ENCODE measurements at regions of chr15 and their contacts with region 1.

Region 1: GRCh38 chr15:50438251-50438650 is 14.0 kb downstream of the USP8 start:
- DNase-seq: no peak
- ATAC-seq: no peak
- H3K4me3 ChIP-seq: no peak overlapping the region
- H3K27ac ChIP-seq: no peak overlapping the region
- H3K4me1 ChIP-seq: no peaks in the 10 kb centered on the region
- H3K27me3 ChIP-seq: no peaks in the 10 kb centered on the region
- CTCF ChIP-seq: no peak

Region 2: DNA sequence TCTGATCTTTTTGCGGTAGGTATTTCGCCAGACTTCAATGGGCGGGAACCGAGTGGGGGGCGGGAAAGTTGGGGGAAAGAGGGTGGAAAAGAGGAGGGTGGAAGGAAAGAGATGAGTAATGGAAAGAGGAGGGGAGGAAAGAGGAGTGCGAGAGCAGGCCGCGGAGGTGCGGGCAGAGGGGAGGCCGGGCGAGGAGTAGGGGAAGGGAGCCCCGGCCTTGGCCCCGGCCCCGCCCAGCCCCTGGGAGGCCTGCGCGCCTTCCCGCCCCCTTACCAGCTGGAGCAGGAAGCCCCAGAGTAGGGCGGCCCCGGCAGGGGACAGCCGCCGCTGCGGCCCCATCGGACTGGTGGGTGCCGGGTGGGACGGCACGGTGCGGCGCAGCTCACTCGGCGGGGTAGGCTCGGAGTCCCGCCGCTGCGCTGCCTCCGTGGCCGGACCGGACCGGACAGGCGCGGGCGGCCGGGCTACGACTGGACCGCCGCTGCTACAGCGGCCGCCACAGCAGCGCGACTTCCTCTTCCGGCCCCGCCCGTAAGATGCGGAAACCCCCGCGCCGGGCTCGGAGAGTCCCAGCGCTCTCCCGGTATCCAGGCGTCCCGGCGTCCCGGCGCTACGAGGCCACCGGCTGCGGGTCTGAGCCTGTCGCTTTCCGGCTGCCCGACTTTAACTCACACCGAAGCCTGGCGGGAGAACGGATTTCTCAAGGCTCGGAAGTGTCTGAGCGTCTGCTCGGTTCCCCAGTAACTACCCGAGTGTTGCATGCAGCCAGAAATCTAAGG is 327.1 kb after region 1 on chr15 and contains the start of gene SPPL2A:
- CTCF ChIA-PET with region 1: no interaction called
- POLR2A ChIA-PET with region 1: interaction called, 20 read pairs
- in situ Hi-C with region 1: no loop called
- intact Hi-C with region 1: no loop called
- DNase-seq: no peak
- ATAC-seq: peak; percentile 99
- H3K4me3 ChIP-seq: peak within 1 kb of the TSS; percentile 77 to 91
- H3K27ac ChIP-seq: peak within 1 kb of the TSS; percentile 98
- H3K4me1 ChIP-seq: peaks cover 14% of the 10 kb centered on the region; the same call in 1 of the 2 replicates
- H3K27me3 ChIP-seq: no peaks in the 10 kb centered on the region
- CTCF ChIP-seq: no peak
- total RNA-seq, gene SPPL2A: 154 TPM

Measured in Panc1 (cell line).